Activated CD8-positive, alpha-beta memory T cell treated with anti-CD3 and anti-CD28 coated beads, Interleukin-2, amount 10 ng/mL, durations not matched to agents 7 days and 5 days (primary cell): ENCODE measurements at regions of chr2 and their contacts with region 1.

Region 1: GRCh38 chr2:170815746-170816503 is 762 bp upstream of the GAD1 start:
- DNase-seq: peak; percentile 72
- ATAC-seq: peak; percentile 60
- H3K4me3 Mint-ChIP-seq: peak overlapping the region; percentile 66
- H3K27ac Mint-ChIP-seq: peak overlapping the region; percentile 24
- H3K4me1 Mint-ChIP-seq: peaks cover 46% of the 10 kb centered on the region
- H3K27me3 Mint-ChIP-seq: peaks cover 88% of the 10 kb centered on the region

Region 2: GRCh38 chr2:170324640-170325046 is 491.3 kb before region 1 on chr2:
- CTCF ChIA-PET with region 1: interaction called, 10 read pairs
- DNase-seq: peak; percentile 57
- ATAC-seq: no peak
- H3K4me3 Mint-ChIP-seq: no peak overlapping the region
- H3K27ac Mint-ChIP-seq: no peak overlapping the region
- H3K4me1 Mint-ChIP-seq: no peaks in the 10 kb centered on the region
- H3K27me3 Mint-ChIP-seq: peaks cover 2% of the 10 kb centered on the region

Region 3: DNA sequence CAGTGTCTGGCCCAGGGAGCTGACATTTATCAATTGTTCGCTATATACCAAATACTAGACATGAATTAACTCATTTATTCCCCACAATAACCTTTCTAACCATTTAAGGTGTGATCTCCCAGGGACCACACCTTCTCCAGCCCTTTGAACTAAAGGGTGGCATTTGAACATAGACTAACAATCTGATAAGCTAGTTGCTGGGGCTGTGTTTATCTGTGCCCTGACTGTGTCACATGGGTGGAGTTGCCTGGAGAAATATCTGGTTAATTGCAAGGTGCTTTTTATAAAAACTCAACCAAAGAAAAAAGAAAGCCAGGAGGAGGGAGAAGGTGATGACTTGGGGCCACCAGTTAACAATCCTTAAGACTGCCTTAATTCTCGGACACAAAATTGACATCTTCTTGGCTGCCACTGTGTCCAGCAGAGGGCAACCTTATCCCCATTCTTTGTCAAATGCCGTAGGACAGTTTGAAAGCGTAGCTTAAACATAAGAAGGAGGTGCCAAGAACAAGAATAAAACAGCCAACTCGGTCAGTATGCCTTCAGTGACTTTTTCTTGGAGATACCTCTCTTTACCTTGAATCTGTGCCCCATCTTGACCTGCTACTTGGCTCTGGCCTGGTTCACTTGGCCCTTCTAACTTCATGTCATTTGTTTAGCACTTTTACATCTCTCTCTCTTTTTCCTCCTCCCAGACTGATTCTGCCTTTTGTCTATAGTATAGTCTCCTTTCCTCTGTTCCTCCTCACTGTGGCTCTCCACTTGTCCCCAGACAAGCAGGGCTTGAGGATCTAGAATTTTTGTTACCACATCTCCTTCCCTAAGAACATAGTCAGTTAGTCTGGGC is 454.6 kb before region 1 on chr2:
- CTCF ChIA-PET with region 1: interaction called, 21 read pairs
- DNase-seq: peak; percentile 77
- ATAC-seq: peak; percentile 69
- H3K4me3 Mint-ChIP-seq: peak overlapping the region; percentile 45
- H3K27ac Mint-ChIP-seq: peak overlapping the region; percentile 69
- H3K4me1 Mint-ChIP-seq: peaks cover 29% of the 10 kb centered on the region
- H3K27me3 Mint-ChIP-seq: peaks cover 8% of the 10 kb centered on the region

Region 4: DNA sequence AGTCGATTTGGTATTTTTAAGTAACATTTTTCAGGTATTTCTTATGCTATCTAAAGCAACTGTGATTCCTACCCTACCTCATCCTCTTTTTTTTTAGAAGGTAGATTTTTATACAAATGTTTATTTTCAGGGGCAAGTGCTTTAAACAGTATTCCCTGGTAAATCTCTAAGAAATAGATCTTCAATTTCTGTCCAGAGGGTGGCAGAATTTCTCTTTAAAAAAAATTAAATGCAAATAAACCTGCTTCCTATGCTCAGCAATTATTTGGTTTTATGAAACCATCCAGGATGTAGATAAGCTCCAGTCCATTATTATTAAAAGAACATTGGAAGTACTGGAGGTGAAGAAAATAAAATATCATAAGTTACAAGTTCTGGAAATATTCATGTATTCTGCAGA is 446.0 kb before region 1 on chr2:
- CTCF ChIA-PET with region 1: interaction called, 42 read pairs
- DNase-seq: no peak
- ATAC-seq: no peak
- H3K4me3 Mint-ChIP-seq: no peak overlapping the region
- H3K27ac Mint-ChIP-seq: no peak overlapping the region
- H3K4me1 Mint-ChIP-seq: peaks cover 44% of the 10 kb centered on the region
- H3K27me3 Mint-ChIP-seq: peaks cover 14% of the 10 kb centered on the region

Region 5: DNA sequence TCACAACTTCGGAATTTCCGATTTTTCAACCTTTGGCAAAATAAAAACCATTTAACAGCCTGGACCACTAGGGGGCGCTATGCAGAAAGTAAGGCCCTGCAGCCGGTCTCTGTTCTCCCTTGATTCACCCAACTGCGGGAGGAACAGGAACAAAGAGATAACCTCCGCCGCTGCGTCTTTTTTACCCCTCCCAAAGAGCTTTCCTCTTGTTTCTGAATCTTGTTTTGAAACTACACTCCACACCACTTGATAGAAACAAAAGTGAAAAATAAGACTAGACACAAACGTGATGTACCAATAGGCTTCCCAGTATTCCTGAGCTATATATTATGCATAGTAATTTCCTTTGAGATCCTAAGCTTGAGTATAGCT is 406.8 kb before region 1 on chr2:
- CTCF ChIA-PET with region 1: interaction called, 15 read pairs
- DNase-seq: peak; percentile 82
- ATAC-seq: peak; percentile 78
- H3K4me3 Mint-ChIP-seq: peak overlapping the region; percentile 47
- H3K27ac Mint-ChIP-seq: no peak overlapping the region
- H3K4me1 Mint-ChIP-seq: peaks cover 13% of the 10 kb centered on the region
- H3K27me3 Mint-ChIP-seq: peaks cover 9% of the 10 kb centered on the region

Region 6: DNA sequence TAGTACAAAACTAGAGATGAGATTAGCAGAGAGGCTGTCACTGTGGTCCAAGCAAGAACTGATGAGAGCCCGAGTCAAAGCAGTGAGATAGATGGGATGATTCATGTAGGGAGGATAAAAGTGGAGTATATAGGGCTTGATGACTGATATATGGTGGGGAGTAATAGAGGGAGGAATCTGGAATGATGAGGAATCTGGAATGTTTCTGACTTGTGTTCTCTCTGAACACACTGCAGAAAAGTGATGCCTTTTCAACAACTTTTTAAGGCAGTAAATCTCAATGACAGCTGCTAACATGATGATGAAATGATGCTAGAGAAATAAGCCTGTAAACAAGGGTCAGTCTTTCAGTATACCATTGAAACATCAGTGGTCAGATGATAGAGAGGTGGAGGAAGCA is 244.3 kb before region 1 on chr2:
- CTCF ChIA-PET with region 1: no interaction called
- DNase-seq: no peak
- ATAC-seq: no peak
- H3K4me3 Mint-ChIP-seq: no peak overlapping the region
- H3K27ac Mint-ChIP-seq: no peak overlapping the region
- H3K4me1 Mint-ChIP-seq: no peaks in the 10 kb centered on the region
- H3K27me3 Mint-ChIP-seq: peaks cover 33% of the 10 kb centered on the region

Region 7: GRCh38 chr2:170715062-170715931 is 100.6 kb before region 1 on chr2 and contains the start of gene SP5:
- CTCF ChIA-PET with region 1: interaction called, 20 read pairs
- DNase-seq: no peak
- ATAC-seq: peak; percentile 43
- H3K4me3 Mint-ChIP-seq: peak within 1 kb of the TSS; percentile 74
- H3K27ac Mint-ChIP-seq: no peak within 1 kb of the TSS
- H3K4me1 Mint-ChIP-seq: peaks cover 26% of the 10 kb centered on the region
- H3K27me3 Mint-ChIP-seq: peaks cover 77% of the 10 kb centered on the region
- total RNA-seq, gene SP5: not detected

Region 8: GRCh38 chr2:170873035-170873692 is 57.2 kb after region 1 on chr2:
- CTCF ChIA-PET with region 1: interaction called, 20 read pairs
- DNase-seq: peak; percentile 87
- ATAC-seq: peak; percentile 98
- H3K4me3 Mint-ChIP-seq: peak overlapping the region; percentile 69
- H3K27ac Mint-ChIP-seq: peak overlapping the region; percentile 76
- H3K4me1 Mint-ChIP-seq: peaks cover 13% of the 10 kb centered on the region
- H3K27me3 Mint-ChIP-seq: peaks cover 10% of the 10 kb centered on the region